ENCODE measurements at regions of chr2 and their contacts with region 1.

Region 1: DNA sequence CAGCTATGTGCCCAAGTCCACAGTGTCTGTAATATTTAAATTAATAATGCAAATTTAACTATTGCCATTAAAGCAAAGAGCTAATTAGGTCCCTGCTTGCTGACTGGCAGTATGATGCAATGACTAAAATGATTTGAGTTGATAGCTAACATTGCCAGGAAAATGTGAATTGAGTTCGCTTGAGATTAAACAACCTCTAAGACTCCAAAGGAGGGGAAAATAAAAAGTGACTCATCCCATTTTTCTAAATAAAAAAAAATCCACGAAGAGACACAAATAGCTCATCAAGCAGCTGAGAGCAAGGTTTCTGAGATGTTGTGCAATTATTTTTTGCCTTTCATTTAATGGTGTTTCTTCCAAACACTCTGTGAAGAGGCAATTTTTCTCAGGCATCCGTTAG is 413.0 kb downstream of the MTX2 start:
- DNase-seq: peak; percentile 40
- H3K4me3 Mint-ChIP-seq: no peak overlapping the region
- H3K27ac Mint-ChIP-seq: peak overlapping the region; percentile 39
- H3K4me1 Mint-ChIP-seq: peaks cover 12% of the 10 kb centered on the region
- H3K27me3 Mint-ChIP-seq: peaks cover 23% of the 10 kb centered on the region
- CTCF ChIP-seq: no peak

Region 2: DNA sequence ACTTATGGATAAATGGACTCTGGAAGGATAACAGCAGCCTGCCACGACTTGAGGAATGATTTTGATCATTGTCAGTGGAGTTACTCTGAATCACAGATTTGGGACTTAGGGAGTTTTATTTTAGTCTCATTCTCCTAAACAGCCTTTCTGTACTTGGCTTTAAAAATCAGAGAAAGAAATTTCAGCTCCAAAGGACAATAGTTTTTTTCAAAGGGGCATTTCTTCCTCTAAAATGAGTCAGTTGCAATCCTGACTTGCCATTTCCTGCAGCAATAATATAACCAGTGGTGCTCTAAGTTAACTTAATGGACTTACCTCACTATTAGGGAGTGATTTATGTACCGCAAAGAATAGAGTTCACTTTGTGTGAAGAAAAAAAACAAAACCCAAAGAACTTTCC is 448.1 kb before region 1 on chr2:
- CTCF ChIA-PET with region 1: no interaction called
- POLR2A ChIA-PET with region 1: no interaction called
- intact Hi-C with region 1: no loop called
- DNase-seq: no peak
- H3K4me3 Mint-ChIP-seq: no peak overlapping the region
- H3K27ac Mint-ChIP-seq: no peak overlapping the region
- H3K4me1 Mint-ChIP-seq: no peaks in the 10 kb centered on the region
- H3K27me3 Mint-ChIP-seq: no peaks in the 10 kb centered on the region
- CTCF ChIP-seq: no peak

Region 3: DNA sequence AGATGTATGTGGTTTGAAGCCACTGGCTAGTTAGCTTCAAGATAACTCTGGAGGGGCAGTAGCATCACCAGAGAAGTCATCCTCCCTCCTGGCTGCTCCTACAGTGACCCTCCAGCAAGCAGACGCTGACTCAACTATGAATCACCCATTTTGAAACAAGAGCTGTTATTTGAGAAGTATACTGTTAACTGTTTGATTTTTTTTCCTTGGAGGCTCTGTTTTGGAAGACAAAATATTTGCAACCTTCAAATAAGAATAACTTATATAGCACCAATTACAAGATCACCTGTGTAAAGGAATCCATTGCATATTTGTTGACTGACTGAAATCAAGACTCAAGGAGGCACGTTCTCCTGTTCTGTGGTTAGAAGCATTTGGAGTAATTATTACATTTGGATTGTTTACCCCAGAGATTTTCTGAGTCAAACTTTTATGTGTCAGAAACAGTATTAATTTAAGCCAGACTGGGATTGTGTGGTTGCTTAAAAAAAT is 99.2 kb before region 1 on chr2:
- CTCF ChIA-PET with region 1: no interaction called
- POLR2A ChIA-PET with region 1: no interaction called
- intact Hi-C with region 1: loop called (anchors 1 kb)
- DNase-seq: peak; percentile 89
- H3K4me3 Mint-ChIP-seq: no peak overlapping the region
- H3K27ac Mint-ChIP-seq: peak overlapping the region; percentile 66
- H3K4me1 Mint-ChIP-seq: peaks cover 17% of the 10 kb centered on the region
- H3K27me3 Mint-ChIP-seq: no peaks in the 10 kb centered on the region
- CTCF ChIP-seq: no peak

Region 4: GRCh38 chr2:176664478-176664877 is 17.8 kb before region 1 on chr2:
- CTCF ChIA-PET with region 1: interaction called, 6 read pairs
- POLR2A ChIA-PET with region 1: interaction called, 11 read pairs
- intact Hi-C with region 1: no loop called
- DNase-seq: no peak
- H3K4me3 Mint-ChIP-seq: no peak overlapping the region
- H3K27ac Mint-ChIP-seq: no peak overlapping the region
- H3K4me1 Mint-ChIP-seq: peaks cover 5% of the 10 kb centered on the region
- H3K27me3 Mint-ChIP-seq: no peaks in the 10 kb centered on the region
- CTCF ChIP-seq: no peak

Measured in MCF 10A (cell line).